ENCODE measurements at regions of chr20 and their contacts with region 1.

Region 1: GRCh38 chr20:62302341-62303058 is at the start of gene ADRM1:
- DNase-seq: peak; percentile 96
- H3K4me3 ChIP-seq: peak within 1 kb of the TSS; percentile 71 to 95
- H3K27ac ChIP-seq: peak within 1 kb of the TSS; percentile 89 to 97
- H3K4me1 ChIP-seq: peaks cover 39% of the 10 kb centered on the region
- H3K27me3 ChIP-seq: no peaks in the 10 kb centered on the region
- CTCF ChIP-seq: peak; percentile 95 to 98 (median 97)
- POLR2A ChIP-seq: no peak
- total RNA-seq, gene ADRM1: 283 to 286 TPM

Region 2: DNA sequence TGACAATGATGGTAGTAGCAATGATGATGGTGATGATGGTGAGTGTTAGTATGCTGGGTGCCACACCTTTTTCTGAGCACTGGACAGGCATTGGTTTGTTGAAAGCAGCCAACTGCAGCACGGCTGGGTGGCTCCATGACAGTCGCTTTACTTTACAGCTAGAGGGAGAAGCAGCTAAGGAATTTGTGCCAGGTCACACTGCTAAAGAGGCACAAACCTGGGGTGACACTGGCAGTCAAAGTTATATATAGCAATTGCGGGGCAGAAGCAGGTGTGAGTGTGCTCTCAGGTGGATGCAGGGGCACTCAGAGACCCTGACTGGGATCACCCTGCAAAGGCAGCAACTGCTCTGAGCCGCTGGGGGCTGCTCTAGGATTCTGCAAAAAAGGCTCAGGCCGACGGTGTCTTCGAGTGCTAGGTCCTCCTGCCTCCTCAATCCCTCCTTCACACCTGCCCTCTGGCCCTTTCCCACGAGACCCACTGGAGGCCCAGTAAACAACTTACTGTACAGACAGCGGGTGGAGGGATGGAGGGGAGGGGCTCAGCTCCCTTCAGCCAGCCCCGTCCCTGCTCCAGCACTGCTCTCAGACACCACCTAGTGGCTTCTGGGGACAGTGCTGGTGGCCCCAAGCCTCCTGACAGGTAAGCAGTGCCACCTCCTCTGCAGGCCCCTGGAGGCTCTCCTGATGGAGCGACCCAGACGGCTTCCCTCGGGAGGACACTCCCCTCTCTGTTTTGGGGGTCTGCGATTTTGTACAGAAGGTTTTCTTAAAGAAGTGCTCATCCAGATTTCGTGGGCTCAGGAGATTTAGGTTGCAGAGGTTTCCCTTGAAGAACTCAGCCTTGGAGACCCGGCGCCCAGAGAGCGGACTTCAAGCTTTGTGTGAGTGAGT is 80.1 kb after region 1 on chr20:
- intact Hi-C with region 1: loop called (anchors 5 kb)
- DNase-seq: peak; percentile 83
- H3K4me3 ChIP-seq: no peak overlapping the region
- H3K27ac ChIP-seq: no peak overlapping the region
- H3K4me1 ChIP-seq: peaks cover 45% of the 10 kb centered on the region
- H3K27me3 ChIP-seq: no peaks in the 10 kb centered on the region
- CTCF ChIP-seq: peak; percentile 64 to 81 (median 75)
- POLR2A ChIP-seq: no peak

Measured in testis (tissue), 5 donors.